Psoas muscle (tissue), 8 donors: ENCODE measurements at regions of chr6 and their contacts with region 1.

Region 1: GRCh38 chr6:42726485-42727086 is 4.2 kb upstream of the PRPH2 start:
- DNase-seq: peak; percentile 63 to 80
- ATAC-seq: peak; percentile 93 to 97 (median 96)
- H3K4me3 ChIP-seq: peak overlapping the region; percentile 75
- H3K27ac ChIP-seq: peak overlapping the region; percentile 58
- H3K4me1 ChIP-seq: peaks cover 7% of the 10 kb centered on the region
- H3K27me3 ChIP-seq: no peaks in the 10 kb centered on the region
- CTCF ChIP-seq: peak; percentile 95

Region 2: DNA sequence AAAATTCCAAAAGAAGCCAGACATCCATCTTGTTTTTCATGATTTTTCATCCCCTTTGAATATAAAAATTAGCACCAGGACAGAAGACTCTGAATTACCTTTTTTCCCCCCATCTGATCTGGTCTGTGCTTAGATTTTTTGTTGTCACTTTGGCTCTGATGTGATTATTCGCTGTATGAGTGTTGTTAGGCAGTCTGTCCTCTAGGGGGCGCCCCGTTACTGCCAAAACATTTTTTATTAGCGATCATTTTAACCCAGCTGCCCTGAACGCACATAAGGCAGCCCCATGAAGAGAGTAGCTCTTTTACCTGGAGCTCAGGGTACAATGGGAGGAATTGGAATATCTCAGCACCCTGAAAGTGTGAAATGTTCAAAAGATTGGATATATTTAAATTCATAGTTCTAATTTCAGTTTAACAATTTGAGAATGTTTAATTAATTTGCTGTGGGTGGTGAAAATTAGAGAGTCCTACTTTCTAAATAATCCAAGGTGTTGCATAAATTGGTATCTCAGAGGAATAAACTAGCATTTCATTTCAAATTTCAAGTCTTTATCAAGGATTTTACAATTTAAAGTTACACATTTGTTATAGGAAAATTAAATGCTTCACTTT is 64.9 kb before region 1 on chr6:
- intact Hi-C with region 1: loop called (anchors 2 kb)
- DNase-seq: peak; percentile 75 to 87
- ATAC-seq: peak; percentile 85 to 94 (median 92)
- H3K4me3 ChIP-seq: no peak overlapping the region
- H3K27ac ChIP-seq: no peak overlapping the region
- H3K4me1 ChIP-seq: no peaks in the 10 kb centered on the region
- H3K27me3 ChIP-seq: no peaks in the 10 kb centered on the region
- CTCF ChIP-seq: peak; percentile 91